Esophagus muscularis mucosa (tissue), 4 donors: ENCODE measurements at regions of chr3 and their contacts with region 1.

Region 1: GRCh38 chr3:69691860-69692259 is 47.4 kb upstream of the MITF start:
- DNase-seq: no peak
- H3K4me3 ChIP-seq: no peak overlapping the region
- H3K27ac ChIP-seq: no peak overlapping the region
- H3K4me1 ChIP-seq: peaks cover 0 to 12% (median 7%) of the 10 kb centered on the region in 4 donors
- H3K27me3 ChIP-seq: no peaks in the 10 kb centered on the region
- CTCF ChIP-seq: no peak
- EP300 ChIP-seq: no peak
- POLR2A ChIP-seq: no peak

Region 2: GRCh38 chr3:69739204-69740102 is 47.6 kb after region 1 on chr3 and contains the start of gene MITF:
- intact Hi-C with region 1: loop called (anchors 2 kb)
- DNase-seq: peak; percentile 97
- H3K4me3 ChIP-seq: peak within 1 kb of the TSS; percentile 83 to 95 (median 90)
- H3K27ac ChIP-seq: peak within 1 kb of the TSS; percentile 90 to 94 (median 92)
- H3K4me1 ChIP-seq: peaks cover 26 to 57% (median 53%) of the 10 kb centered on the region in 4 donors
- H3K27me3 ChIP-seq: no peaks in the 10 kb centered on the region
- CTCF ChIP-seq: peak in 1 of 3 experiments; percentile 3
- EP300 ChIP-seq: no peak
- POLR2A ChIP-seq: peak; percentile 85
- total RNA-seq, gene MITF: 68.1 to 141 (median 81.2) TPM

Region 3: GRCh38 chr3:69791919-69792399 is 100.1 kb after region 1 on chr3:
- intact Hi-C with region 1: loop called (anchors 2 kb)
- DNase-seq: no peak
- H3K4me3 ChIP-seq: no peak overlapping the region
- H3K27ac ChIP-seq: peak overlapping the region; percentile 3 to 44 (median 26)
- H3K4me1 ChIP-seq: peaks cover 45 to 55% (median 46%) of the 10 kb centered on the region in 4 donors
- H3K27me3 ChIP-seq: no peaks in the 10 kb centered on the region
- CTCF ChIP-seq: peak; percentile 43 to 60 (median 56)
- EP300 ChIP-seq: no peak
- POLR2A ChIP-seq: no peak

Region 4: DNA sequence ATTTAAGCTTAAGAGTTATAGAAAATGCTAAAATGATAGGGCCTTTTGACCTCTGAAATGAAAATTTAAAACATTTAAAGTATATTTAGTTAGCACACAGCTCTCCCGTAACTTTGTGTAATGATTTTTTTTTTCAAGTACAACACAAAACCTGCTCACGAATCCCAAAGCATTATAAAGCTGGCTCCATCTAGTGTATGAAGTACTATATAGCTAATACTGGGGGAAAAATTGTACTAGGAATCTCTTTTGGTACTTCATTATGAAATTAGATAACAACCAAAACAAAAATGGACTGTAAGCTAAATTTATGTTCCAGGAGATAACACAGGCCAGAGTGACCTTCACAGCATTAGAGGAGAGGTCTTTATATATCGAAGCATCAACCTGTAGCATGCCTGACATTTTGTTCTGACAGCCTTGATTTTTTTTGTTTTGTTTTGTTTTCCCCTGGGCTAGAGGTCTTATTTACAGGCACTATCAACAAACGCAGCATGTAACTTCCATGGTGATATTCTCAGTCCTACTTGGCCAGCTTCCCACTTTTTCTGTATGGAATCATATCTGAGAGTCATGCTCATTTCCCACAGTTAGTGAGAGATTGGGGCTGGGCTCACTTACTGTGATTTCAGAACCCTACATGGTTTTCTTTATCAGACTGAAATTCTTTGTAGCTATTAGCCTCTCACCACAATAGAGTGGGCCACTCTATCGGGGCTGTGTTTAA is 163.7 kb after region 1 on chr3:
- intact Hi-C with region 1: loop called (anchors 5 kb)
- DNase-seq: no peak
- H3K4me3 ChIP-seq: no peak overlapping the region
- H3K27ac ChIP-seq: peak overlapping the region; percentile 31 to 46 (median 40)
- H3K4me1 ChIP-seq: peaks cover 34 to 47% (median 38%) of the 10 kb centered on the region in 4 donors
- H3K27me3 ChIP-seq: no peaks in the 10 kb centered on the region
- CTCF ChIP-seq: peak; percentile 47 to 52 (median 48)
- EP300 ChIP-seq: no peak
- POLR2A ChIP-seq: no peak

Region 5: DNA sequence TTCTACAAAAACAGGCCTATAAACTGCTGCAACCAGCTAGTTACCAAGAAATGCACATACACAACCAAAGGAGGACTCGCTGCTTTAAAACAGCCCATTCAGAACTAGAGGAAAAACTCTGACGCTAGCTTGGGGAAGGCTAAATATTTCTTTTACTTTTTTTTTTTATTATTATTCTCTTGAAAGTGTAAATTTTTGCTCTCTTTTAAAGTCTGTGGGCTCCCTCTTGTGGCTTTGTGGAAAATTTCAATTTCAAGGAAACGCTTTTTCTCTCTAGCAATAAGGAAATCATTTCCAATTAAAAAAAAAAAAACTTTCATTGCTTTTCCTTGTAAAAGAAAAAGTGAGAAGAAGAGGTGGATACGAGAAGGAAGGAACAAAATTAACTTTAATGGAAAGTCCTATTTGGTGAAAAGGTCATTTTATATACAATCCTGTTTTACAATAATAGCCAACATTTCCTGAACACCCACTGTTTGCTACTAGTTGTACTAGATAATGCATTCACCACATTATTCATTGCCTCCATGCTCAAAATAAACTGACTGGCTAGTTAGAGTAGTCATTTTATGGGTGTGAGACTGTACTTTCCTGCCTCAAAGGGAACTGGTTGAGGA is 256.5 kb after region 1 on chr3:
- intact Hi-C with region 1: loop called (anchors 2 kb)
- DNase-seq: no peak
- H3K4me3 ChIP-seq: no peak overlapping the region
- H3K27ac ChIP-seq: peak overlapping the region in 2 of 4 donors; percentile 8 to 28
- H3K4me1 ChIP-seq: peaks cover 7 to 28% (median 26%) of the 10 kb centered on the region in 4 donors
- H3K27me3 ChIP-seq: no peaks in the 10 kb centered on the region
- CTCF ChIP-seq: peak; percentile 59 to 70 (median 61)
- EP300 ChIP-seq: no peak
- POLR2A ChIP-seq: no peak